CD8-positive, alpha-beta T cell (primary cell): ENCODE measurements at regions of chr13 and their contacts with region 1.

Region 1: GRCh38 chr13:102394158-102395053 is 7.4 kb downstream of the FGF14 start:
- DNase-seq: peak; percentile 88 to 98 (median 97)
- ATAC-seq: peak; percentile 90
- H3K4me3 ChIP-seq: peak overlapping the region; percentile 79 to 96
- H3K4me3 Mint-ChIP-seq: peak overlapping the region; percentile 88
- H3K27ac ChIP-seq: peak overlapping the region; percentile 65 to 76
- H3K27ac Mint-ChIP-seq: peak overlapping the region; percentile 82
- H3K4me1 ChIP-seq: peaks cover 14% of the 10 kb centered on the region
- H3K4me1 Mint-ChIP-seq: peaks cover 8% of the 10 kb centered on the region
- H3K27me3 ChIP-seq: peaks cover 1 to 2% of the 10 kb centered on the region in 2 experiments
- H3K27me3 Mint-ChIP-seq: peaks cover 12% of the 10 kb centered on the region
- CTCF ChIP-seq: no peak

Region 2: DNA sequence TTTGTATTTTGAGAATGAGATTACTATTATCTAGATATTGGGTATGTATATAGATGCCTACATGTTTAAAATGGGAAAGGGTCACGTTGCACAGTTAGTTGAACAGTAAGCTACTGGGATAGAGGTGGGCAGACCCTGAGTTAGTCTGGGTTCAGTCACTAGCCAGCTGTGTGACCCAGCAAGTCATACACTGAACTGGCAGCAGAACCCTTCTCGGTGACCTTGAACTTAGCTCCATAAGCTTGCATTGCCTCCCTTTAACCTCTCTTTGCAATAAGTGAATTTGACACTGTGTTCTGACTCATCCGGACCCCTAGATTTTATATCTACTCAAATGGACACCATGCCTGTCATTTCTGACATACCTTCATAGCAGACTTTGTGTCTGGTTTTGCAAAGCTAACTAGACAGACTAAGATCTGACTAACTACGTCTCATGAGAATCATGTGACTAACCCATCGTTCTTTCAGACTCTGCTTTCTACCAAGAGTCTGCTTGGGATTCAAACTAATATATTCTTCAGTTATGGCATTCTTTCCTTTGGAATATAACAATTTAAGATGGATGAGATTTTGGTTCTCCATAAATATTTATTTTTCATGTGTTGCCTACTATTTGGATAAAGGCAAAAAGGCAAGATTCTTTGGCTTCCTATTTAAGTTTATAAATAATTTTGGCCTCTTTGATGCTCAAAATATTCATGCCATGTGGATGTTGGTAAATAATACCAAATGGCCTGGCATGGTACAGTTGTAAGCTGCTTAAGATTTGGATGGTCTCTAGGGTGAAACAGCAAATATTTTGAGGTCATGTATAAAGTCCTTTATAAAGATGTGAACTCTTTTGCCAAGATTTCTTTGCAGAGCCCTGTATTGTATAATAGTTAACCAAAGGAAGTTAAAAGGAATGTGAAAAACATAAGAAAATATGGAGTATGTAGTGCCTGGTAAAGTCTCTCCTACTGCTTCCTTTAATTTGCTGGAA is 782.6 kb before region 1 on chr13:
- CTCF ChIA-PET with region 1: no interaction called
- POLR2A ChIA-PET with region 1: no interaction called
- intact Hi-C with region 1: no loop called
- DNase-seq: no peak
- ATAC-seq: no peak
- H3K4me3 ChIP-seq: no peak overlapping the region
- H3K4me3 Mint-ChIP-seq: no peak overlapping the region
- H3K27ac ChIP-seq: no peak overlapping the region
- H3K27ac Mint-ChIP-seq: no peak overlapping the region
- H3K4me1 ChIP-seq: no peaks in the 10 kb centered on the region
- H3K4me1 Mint-ChIP-seq: no peaks in the 10 kb centered on the region
- H3K27me3 ChIP-seq: no peaks in the 10 kb centered on the region
- H3K27me3 Mint-ChIP-seq: peaks cover 14% of the 10 kb centered on the region
- CTCF ChIP-seq: no peak

Region 3: DNA sequence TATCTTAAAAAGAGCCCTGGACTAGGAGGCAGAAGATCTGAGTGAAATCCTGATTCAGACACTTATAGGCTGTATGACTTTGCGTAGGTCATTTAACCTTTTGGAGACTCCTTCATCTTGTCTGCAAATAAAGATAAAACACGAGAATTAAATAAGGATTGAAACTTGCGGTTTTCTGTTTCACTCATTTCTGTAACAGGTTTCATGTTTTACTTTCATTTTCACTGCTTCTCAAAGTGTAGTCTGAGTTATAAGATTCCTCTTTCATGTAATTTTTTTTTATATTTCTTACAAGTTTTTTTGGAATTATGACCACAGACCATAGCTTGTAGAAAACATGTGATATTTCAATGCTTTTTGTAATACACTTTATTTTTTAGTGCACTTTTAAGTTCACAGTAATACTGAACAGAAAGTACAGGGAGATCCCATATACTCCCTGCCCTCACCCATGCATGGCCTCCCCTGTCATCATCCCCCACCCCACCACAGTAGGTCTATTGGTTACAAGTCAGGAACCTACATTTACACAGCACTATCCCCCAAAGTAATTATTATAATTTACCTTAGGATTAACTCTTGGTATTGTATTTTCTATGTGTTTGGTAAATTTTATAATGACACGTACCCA is 767.4 kb before region 1 on chr13:
- CTCF ChIA-PET with region 1: no interaction called
- POLR2A ChIA-PET with region 1: no interaction called
- intact Hi-C with region 1: loop called in 1 of 2 experiments (anchors 10 kb)
- DNase-seq: peak in 4 of 9 experiments; percentile 26 to 61 (median 40)
- ATAC-seq: peak; percentile 69
- H3K4me3 ChIP-seq: peak overlapping the region; percentile 29 to 32
- H3K4me3 Mint-ChIP-seq: peak overlapping the region; percentile 61
- H3K27ac ChIP-seq: peak overlapping the region; percentile 34 to 60
- H3K27ac Mint-ChIP-seq: peak overlapping the region; percentile 85
- H3K4me1 ChIP-seq: peaks cover 29% of the 10 kb centered on the region
- H3K4me1 Mint-ChIP-seq: peaks cover 42% of the 10 kb centered on the region
- H3K27me3 ChIP-seq: peaks cover 0 to 2% of the 10 kb centered on the region in 2 experiments
- H3K27me3 Mint-ChIP-seq: no peaks in the 10 kb centered on the region
- CTCF ChIP-seq: no peak

Region 4: GRCh38 chr13:102212729-102213128 is 181.7 kb before region 1 on chr13:
- CTCF ChIA-PET with region 1: no interaction called
- POLR2A ChIA-PET with region 1: no interaction called
- intact Hi-C with region 1: no loop called
- DNase-seq: no peak
- ATAC-seq: no peak
- H3K4me3 ChIP-seq: no peak overlapping the region
- H3K4me3 Mint-ChIP-seq: no peak overlapping the region
- H3K27ac ChIP-seq: no peak overlapping the region
- H3K27ac Mint-ChIP-seq: no peak overlapping the region
- H3K4me1 ChIP-seq: no peaks in the 10 kb centered on the region
- H3K4me1 Mint-ChIP-seq: no peaks in the 10 kb centered on the region
- H3K27me3 ChIP-seq: no peaks in the 10 kb centered on the region
- H3K27me3 Mint-ChIP-seq: peaks cover 5% of the 10 kb centered on the region
- CTCF ChIP-seq: no peak

Region 5: GRCh38 chr13:102773441-102774215 is 379.2 kb after region 1 on chr13 and contains the start of gene TEX30:
- CTCF ChIA-PET with region 1: no interaction called
- POLR2A ChIA-PET with region 1: no interaction called
- intact Hi-C with region 1: loop called (anchors 1 to 2 kb)
- DNase-seq: peak; percentile 75 to 93 (median 86)
- ATAC-seq: peak; percentile 96
- H3K4me3 ChIP-seq: peak within 1 kb of the TSS; percentile 66 to 70
- H3K4me3 Mint-ChIP-seq: peak within 1 kb of the TSS; percentile 88
- H3K27ac ChIP-seq: peak within 1 kb of the TSS; percentile 70 to 82
- H3K27ac Mint-ChIP-seq: peak within 1 kb of the TSS; percentile 91
- H3K4me1 ChIP-seq: peaks cover 15% of the 10 kb centered on the region
- H3K4me1 Mint-ChIP-seq: peaks cover 34% of the 10 kb centered on the region
- H3K27me3 ChIP-seq: no peaks in the 10 kb centered on the region
- H3K27me3 Mint-ChIP-seq: no peaks in the 10 kb centered on the region
- CTCF ChIP-seq: no peak
- total RNA-seq, gene TEX30: 10.4 to 10.9 TPM

Region 6: DNA sequence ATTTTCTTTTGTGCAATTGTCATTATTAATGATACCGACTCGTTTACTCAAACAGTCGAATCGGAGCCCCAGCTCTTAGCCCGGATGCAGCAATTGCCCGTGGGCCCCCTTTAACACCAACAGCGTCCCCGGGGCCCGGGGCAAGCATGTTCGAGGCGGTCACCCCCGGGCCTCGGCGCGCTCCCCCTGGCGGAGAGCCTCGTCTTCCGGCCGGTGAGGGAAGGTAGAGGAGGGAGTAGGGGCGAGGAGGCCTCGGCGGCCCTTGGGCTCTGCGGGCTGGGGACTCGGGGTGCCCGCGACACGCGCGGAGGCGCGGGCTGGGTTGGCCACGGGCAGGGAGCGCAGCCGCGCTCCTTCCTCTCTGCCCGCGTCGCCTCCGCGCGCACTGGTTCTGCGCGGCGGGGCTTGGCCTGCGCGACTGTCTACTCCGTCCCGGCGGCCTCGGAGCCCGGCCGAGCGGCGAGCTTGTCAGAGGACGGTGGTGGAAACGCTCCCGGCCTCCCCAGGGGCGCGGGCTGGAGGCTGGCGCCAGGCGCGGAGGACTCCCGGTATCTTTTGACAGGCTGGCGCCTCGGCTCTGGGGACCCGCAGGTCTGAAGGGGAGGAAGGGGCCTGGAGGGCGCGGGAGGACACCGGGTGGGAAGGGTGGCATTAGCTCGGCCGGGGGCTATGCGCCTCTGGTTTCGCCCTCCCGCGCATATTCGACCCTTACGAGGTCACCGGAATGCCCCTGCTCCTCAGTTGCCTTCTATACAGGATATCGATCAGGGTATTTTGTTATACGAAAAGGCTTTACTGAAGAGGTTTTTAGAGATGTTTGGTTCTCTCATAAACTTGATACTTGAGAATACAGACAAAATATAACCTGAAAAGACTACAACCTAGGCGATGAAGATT is 406.0 kb after region 1 on chr13:
- CTCF ChIA-PET with region 1: no interaction called
- POLR2A ChIA-PET with region 1: no interaction called
- intact Hi-C with region 1: loop called in 1 of 2 experiments (anchors 5 kb)
- DNase-seq: peak; percentile 65 to 89 (median 84)
- ATAC-seq: peak; percentile 77
- H3K4me3 ChIP-seq: peak overlapping the region; percentile 62 to 86
- H3K4me3 Mint-ChIP-seq: peak overlapping the region; percentile 92
- H3K27ac ChIP-seq: peak overlapping the region; percentile 36 to 44
- H3K27ac Mint-ChIP-seq: peak overlapping the region; percentile 74
- H3K4me1 ChIP-seq: peaks cover 10% of the 10 kb centered on the region
- H3K4me1 Mint-ChIP-seq: peaks cover 30% of the 10 kb centered on the region
- H3K27me3 ChIP-seq: peaks cover 0 to 5% of the 10 kb centered on the region in 2 experiments
- H3K27me3 Mint-ChIP-seq: peaks cover 11% of the 10 kb centered on the region
- CTCF ChIP-seq: peak; percentile 64